ENCODE measurements at regions of chr17 and their contacts with region 1.

Region 1: GRCh38 chr17:38868817-38869525 is 887 bp upstream of the LASP1 start:
- DNase-seq: peak; percentile 85 to 96 (median 92)
- H3K4me3 ChIP-seq: peak overlapping the region; percentile 66 to 99 (median 96)
- H3K27ac ChIP-seq: peak overlapping the region; percentile 86 to 100 (median 99)
- H3K27me3 ChIP-seq: no peaks in the 10 kb centered on the region
- CTCF ChIP-seq: peak in 30 of 56 donors; percentile 9 to 57 (median 24)

Region 2: DNA sequence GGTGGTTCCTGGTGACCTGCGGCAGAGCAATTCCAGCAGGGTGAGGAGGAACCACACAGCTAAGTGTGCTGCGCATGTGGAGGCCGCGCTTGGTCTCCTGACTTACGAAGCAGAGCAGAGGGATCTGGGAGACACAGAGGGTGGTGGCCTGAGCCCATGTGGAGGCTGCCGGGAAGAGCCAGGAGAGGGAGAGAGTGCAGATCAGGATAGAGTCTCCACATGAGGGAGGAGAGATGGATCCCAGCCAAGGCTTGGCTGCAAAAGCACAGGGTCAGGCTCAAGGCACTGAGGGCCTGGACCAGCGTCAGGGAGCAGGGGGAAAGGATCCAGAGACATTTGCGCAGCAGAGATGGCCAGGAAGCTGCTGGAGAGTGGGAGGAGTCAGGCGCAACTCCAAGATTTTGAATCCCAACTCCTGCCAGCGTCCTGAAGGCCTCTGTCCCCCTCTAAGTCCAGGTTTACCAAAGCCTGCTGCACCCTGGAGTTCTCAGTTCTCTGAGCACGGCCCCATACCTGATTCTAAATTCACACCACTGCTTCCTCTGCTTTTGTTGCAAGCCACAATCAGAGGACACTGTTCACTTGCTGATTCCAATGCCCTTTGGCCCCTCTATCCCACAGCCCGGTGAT is 175.2 kb before region 1 on chr17:
- intact Hi-C with region 1: no loop called
- DNase-seq: peak in 3 of 10 donors; percentile 35 to 50 (median 48)
- H3K4me3 ChIP-seq: no peak overlapping the region
- H3K27ac ChIP-seq: peak overlapping the region in 39 of 59 donors; percentile 0 to 83 (median 43)
- H3K27me3 ChIP-seq: no peaks in the 10 kb centered on the region
- CTCF ChIP-seq: no peak

Region 3: DNA sequence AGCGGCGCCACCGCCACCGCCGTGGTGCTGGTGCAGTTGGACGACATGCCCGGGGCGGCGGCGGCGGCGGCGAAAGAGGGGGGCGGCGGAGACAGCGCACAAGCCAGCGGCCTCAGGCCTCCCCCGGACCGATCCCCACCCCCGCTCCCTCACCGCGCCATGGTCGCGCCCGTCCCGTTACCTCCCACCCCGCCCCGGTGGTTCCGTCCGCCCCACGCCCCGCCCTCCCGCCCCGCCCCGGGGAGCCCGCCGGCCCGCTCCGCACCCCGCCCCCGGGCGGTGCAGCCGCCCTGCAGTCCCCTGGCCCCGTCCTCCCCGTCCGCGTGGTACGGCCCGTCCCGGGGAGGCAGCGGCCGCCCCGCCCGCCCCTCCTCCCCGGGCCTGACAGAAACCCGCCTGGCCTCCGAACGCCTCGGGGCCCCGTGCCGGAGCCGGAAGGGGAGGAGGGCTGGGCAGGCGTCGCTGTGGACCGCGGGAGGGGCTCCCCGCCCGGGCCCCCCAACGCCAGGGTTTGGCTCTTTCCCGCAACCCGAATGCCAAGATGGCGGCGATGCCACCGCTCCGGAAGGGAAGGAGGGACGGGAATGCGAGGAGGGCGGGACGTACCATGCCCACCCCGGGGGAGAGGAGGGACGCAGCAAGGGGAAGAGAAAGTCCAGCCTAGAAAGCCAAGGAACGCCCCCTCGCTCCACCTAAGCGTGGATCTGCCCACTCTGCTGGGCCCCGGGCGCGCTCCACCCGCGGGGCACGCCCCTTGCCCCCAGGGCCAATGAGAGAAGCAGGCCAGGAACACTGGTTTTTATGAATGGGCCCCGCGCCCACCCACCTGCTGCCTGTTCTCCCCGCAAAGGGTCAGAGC is 69.4 kb before region 1 on chr17 and contains the start of gene PIP4K2B:
- intact Hi-C with region 1: loop called in 1 of 2 experiments (anchors 5 kb)
- DNase-seq: peak; percentile 85 to 98 (median 96)
- H3K4me3 ChIP-seq: peak within 1 kb of the TSS; percentile 74 to 98 (median 91)
- H3K27ac ChIP-seq: peak within 1 kb of the TSS; percentile 91 to 100 (median 100)
- H3K27me3 ChIP-seq: no peaks in the 10 kb centered on the region
- CTCF ChIP-seq: peak in 16 of 56 donors; percentile 2 to 31 (median 19)
- total RNA-seq, gene PIP4K2B: 106 to 220 (median 167) TPM

Region 4: GRCh38 chr17:38824899-38825761 is 43.8 kb before region 1 on chr17 and contains the start of gene CWC25:
- intact Hi-C with region 1: loop called in 1 of 2 experiments (anchors 5 kb)
- DNase-seq: peak; percentile 86 to 98 (median 93)
- H3K4me3 ChIP-seq: peak within 1 kb of the TSS; percentile 57 to 97 (median 85)
- H3K27ac ChIP-seq: peak within 1 kb of the TSS; percentile 90 to 100 (median 98)
- H3K27me3 ChIP-seq: no peaks in the 10 kb centered on the region
- CTCF ChIP-seq: peak in 19 of 56 donors; percentile 6 to 53 (median 22)
- total RNA-seq, gene CWC25: 12.1 to 25.1 (median 17.5) TPM

Region 5: DNA sequence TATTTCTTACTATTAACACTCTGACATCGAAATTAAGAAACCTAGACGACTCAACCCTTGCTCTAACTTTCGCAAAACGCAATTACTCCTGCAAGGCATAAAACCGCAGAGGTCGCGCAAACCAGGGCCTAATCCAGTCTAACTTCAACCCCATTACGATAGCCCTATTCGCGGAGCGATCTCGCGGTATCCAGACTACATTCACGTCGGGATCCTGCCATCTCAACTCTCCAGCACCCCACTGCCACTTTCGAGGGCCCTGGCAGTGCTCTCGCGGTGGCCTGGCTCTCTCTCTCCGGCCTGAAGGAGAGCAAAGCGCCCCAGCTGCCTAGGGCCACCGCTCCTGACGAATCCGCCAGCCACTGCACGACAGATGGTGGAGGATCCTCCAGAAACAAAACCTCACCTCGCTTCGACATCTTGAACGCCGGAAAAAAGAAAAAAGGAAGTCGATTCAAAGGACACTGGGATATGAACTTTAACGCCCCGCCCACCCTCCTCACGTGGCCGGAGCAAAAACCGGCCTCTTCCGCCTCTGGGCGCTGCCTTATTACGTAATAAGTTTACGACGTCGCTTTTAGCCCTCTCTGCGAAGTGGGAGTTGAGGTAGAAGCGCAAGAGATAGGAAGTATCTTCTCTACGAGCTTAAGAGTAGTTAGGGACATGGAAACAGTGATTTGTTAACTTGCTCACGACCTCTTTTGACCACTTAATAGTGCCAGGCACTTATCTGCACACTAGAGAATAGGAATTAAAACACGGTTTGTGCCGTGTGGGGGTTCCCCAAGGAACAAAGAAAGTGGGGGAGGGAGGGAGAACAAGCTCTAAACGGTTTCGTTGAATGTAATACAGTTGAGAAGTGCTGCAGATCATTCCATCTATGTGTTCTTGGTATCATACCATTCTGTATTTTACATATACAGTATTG is 15.4 kb before region 1 on chr17 and contains the start of gene RPL23:
- intact Hi-C with region 1: loop called in 1 of 2 experiments (anchors 2 kb)
- DNase-seq: peak; percentile 87 to 95 (median 93)
- H3K4me3 ChIP-seq: peak within 1 kb of the TSS; percentile 45 to 95 (median 77)
- H3K27ac ChIP-seq: peak within 1 kb of the TSS; percentile 65 to 98 (median 93)
- H3K27me3 ChIP-seq: no peaks in the 10 kb centered on the region
- CTCF ChIP-seq: peak in 25 of 56 donors; percentile 8 to 53 (median 24)
- total RNA-seq, gene RPL23: 239 to 571 (median 364) TPM

Region 6: GRCh38 chr17:38922538-38923297 is 53.7 kb after region 1 on chr17:
- intact Hi-C with region 1: loop called (anchors 1 to 5 kb)
- DNase-seq: peak in 4 of 10 donors; percentile 26 to 75 (median 35)
- H3K4me3 ChIP-seq: peak overlapping the region in 1 of 59 donors; percentile 2
- H3K27ac ChIP-seq: peak overlapping the region in 52 of 59 donors; percentile 4 to 86 (median 62)
- H3K27me3 ChIP-seq: no peaks in the 10 kb centered on the region
- CTCF ChIP-seq: no peak

Region 7: DNA sequence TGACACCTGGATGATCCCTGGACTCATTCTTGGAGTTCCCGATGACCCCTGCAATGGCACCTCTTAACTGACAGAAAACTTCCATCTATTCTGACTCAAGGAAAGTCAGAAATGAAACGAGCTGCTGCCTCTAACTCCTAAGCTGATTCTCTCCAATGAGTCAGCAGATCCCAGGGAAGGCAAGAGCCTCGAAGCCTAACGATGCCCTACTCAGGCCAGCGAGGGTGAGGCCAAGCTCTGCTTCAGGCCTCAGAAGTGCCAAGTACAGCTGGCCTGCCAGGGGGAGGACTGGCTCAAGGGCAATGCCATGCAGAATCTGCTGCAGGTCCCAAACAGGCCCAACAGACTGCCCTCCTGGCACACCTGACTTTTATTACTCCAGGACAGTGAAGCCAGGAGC is 246.2 kb after region 1 on chr17:
- intact Hi-C with region 1: no loop called
- DNase-seq: no peak
- H3K4me3 ChIP-seq: no peak overlapping the region
- H3K27ac ChIP-seq: peak overlapping the region in 46 of 59 donors; percentile 1 to 84 (median 55)
- H3K27me3 ChIP-seq: no peaks in the 10 kb centered on the region
- CTCF ChIP-seq: no peak

Measured in dorsolateral prefrontal cortex (tissue), 120 donors.